HCT116 (cell line): ENCODE measurements at regions of chr9 and their contacts with region 1.

Region 1: GRCh38 chr9:124708633-124709291 is 62.3 kb downstream of the NR6A1 start:
- DNase-seq: no peak
- ATAC-seq: no peak
- H3K4me3 ChIP-seq: no peak overlapping the region
- H3K27ac ChIP-seq: no peak overlapping the region
- H3K4me1 ChIP-seq: peaks cover 3 to 13% of the 10 kb centered on the region in 2 experiments
- H3K27me3 ChIP-seq: no peaks in the 10 kb centered on the region
- CTCF ChIP-seq: no peak
- POLR2A ChIP-seq: no peak
- RAD21 ChIP-seq: no peak

Region 2: GRCh38 chr9:124754289-124754688 is 45.5 kb after region 1 on chr9:
- CTCF ChIA-PET with region 1: interaction called, 3 read pairs
- POLR2A ChIA-PET with region 1: no interaction called
- RAD21 ChIA-PET with region 1: no interaction called
- intact Hi-C with region 1: loop called (anchors 2 kb)
- DNase-seq: no peak
- ATAC-seq: peak; percentile 75
- H3K4me3 ChIP-seq: no peak overlapping the region
- H3K27ac ChIP-seq: no peak overlapping the region
- H3K4me1 ChIP-seq: peaks cover 22 to 39% of the 10 kb centered on the region in 2 experiments
- H3K27me3 ChIP-seq: no peaks in the 10 kb centered on the region
- CTCF ChIP-seq: peak; percentile 50 to 69 (median 60); a peak in 5 of 6 replicates
- POLR2A ChIP-seq: no peak
- RAD21 ChIP-seq: peak; percentile 73

Region 3: DNA sequence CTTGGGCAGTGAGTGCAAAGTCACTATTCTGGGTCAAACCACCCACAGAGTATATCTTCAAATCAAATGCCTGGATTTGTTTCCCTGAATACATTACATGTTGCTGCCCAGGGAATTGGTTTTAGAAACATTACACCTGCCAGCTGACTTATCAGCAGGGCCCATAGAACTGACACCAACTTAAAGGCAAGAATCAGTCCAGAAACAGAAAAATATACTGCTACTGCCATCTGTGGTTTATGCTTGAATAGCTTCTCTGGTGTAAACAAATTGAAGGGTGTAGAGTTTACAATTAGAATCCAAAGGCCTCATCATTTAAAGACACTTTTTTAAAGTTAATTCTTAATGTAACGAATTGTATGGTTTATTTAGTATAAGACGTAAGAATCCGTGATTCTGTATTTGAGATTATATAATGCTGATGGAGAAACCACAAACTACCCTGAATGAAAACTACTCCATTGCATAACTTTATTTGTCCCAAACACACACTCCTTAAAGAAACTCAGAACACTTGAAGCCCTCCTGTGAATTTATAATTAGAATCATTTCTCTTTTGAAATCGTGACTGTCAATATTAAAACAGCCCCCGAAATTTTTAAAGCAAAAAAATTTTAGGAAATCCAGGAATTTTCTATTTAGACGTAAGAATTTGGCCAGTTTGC is 56.1 kb after region 1 on chr9:
- CTCF ChIA-PET with region 1: interaction called, 7 read pairs
- POLR2A ChIA-PET with region 1: no interaction called
- RAD21 ChIA-PET with region 1: interaction called, 3 to 6 read pairs
- intact Hi-C with region 1: loop called (anchors 2 kb)
- DNase-seq: no peak
- ATAC-seq: peak; percentile 41; the same call in 1 of the 2 replicates
- H3K4me3 ChIP-seq: no peak overlapping the region
- H3K27ac ChIP-seq: no peak overlapping the region
- H3K4me1 ChIP-seq: peaks cover 25 to 27% of the 10 kb centered on the region in 2 experiments
- H3K27me3 ChIP-seq: no peaks in the 10 kb centered on the region
- CTCF ChIP-seq: peak in 2 of 3 experiments; percentile 23 to 46; a peak in 3 of 6 replicates
- POLR2A ChIP-seq: no peak
- RAD21 ChIP-seq: no peak

Region 4: GRCh38 chr9:125521462-125522327 is 812.9 kb after region 1 on chr9:
- CTCF ChIA-PET with region 1: no interaction called
- POLR2A ChIA-PET with region 1: no interaction called
- RAD21 ChIA-PET with region 1: no interaction called
- intact Hi-C with region 1: no loop called
- DNase-seq: peak; percentile 76
- ATAC-seq: peak; percentile 90
- H3K4me3 ChIP-seq: peak overlapping the region; percentile 6 to 46; a peak in 2 of 4 replicates
- H3K27ac ChIP-seq: peak overlapping the region; percentile 59; the same call in 1 of the 2 replicates
- H3K4me1 ChIP-seq: peaks cover 7 to 32% of the 10 kb centered on the region in 2 experiments
- H3K27me3 ChIP-seq: no peaks in the 10 kb centered on the region
- CTCF ChIP-seq: no peak
- POLR2A ChIP-seq: no peak
- RAD21 ChIP-seq: peak; percentile 18